ENCODE measurements at regions of chr5 and their contacts with region 1.

Region 1: DNA sequence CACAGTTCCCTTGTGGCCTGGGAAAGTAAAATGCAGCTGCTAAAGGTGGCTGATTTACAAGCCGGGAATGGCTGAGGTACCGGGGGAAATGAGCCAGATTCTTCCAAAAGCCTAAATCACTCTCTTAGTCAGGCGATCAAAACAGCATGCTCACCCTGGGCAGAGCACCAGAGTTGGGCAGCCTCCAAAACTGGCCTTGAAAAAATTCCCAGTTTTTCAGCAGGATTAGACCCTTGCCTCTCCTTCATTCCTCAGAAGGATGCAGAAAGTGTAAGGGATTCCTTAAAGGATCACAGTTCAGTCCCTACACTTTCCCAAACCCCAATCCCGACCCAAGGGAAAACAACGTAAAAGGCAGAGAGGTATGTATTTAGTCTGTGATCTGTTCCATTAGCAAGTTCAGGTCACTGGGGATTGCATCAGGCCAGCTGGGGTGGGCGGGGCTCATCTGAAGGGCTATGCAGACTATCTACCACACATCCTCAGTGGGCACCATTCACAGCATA is 16.9 kb downstream of the TMEM174 start:
- DNase-seq: no peak

Region 2: DNA sequence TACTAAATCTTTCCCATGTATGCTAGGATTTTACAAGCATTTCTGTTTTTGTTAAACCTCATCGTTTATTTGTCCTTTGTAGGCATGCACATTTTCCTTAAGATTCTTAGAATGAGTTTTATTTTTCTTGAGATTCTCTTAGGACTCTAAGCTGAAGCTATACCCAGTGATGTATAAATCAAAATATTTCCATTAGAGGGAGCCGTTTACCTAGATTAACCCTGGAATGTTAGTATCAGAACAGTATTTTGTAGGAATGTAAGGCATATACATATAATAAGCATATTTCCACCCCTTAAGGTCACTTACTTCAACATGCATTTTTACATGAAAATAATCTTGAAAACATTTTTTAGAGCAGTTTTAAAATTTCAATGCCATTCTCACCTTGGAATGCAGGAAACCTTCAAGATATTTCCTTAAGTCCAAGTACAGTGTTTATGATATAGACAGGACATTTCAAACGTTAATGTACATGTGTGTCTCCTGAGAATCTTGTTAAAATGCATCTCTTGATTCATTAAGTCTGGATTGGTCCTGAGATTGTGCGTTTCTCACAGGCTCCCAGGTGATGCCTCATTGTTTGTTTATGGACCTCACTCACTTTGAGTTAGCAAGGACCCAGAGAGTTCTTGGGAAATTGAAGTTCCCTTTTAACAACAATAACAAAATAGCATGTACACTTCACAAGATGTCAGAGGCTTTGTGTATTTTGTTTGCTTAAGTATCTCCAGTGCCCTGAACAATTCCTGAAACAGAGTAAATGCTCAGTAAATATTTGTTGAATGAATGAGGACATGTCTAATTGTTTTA is 269.0 kb before region 1 on chr5:
- in situ Hi-C with region 1: loop called (anchors 25 kb)
- DNase-seq: peak; percentile 62

Region 3: GRCh38 chr5:73093943-73094342 is 96.0 kb before region 1 on chr5:
- in situ Hi-C with region 1: loop called (anchors 25 kb)
- DNase-seq: peak; percentile 24

Measured in SK-MEL-5 (cell line).